Right cardiac atrium (tissue), 5 donors: ENCODE measurements at regions of chr12 and their contacts with region 1.

Region 1: GRCh38 chr12:642633-643474 is 20.4 kb downstream of the NINJ2 start:
- DNase-seq: peak; percentile 83 to 92 (median 91)
- ATAC-seq: peak; percentile 62 to 74
- H3K4me3 ChIP-seq: peak overlapping the region; percentile 57
- H3K27ac ChIP-seq: peak overlapping the region; percentile 90
- H3K4me1 ChIP-seq: peaks cover 16% of the 10 kb centered on the region
- H3K27me3 ChIP-seq: no peaks in the 10 kb centered on the region

Region 2: DNA sequence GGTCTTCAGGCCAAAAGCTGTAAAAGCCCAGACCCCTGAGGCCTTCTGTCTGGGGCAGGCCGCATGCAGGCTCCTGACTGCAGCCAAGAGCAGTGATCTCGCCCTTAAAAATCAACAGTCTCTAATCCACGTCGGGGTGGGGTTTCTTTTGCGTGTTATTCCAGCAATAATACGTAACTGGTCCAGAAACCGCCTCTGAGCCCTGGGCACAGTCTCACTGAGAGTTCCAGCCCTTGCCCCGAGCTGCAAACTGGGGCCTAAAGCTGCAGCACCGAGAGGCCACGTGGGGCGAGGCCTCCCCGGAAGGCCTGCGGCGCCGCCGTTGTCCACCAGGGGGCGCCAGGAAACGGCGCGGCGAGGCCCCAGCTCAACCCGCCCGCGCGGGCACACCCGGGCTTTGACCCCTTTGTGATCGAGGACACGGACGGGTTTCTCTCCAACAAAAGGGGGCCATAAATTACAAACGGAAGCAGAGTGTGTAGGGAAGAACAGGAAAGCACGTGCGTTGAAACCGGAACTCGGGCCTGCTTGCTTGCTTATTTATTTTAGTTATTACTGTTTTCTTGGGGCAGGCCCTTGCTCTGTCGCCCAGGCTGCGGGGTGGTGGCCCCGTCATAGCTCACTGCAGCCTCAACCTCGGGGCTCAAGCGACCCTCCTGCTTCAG is 66.8 kb before region 1 on chr12:
- intact Hi-C with region 1: loop called in 1 of 4 experiments (anchors 10 kb)
- DNase-seq: peak; percentile 88 to 95 (median 95)
- ATAC-seq: peak; percentile 74 to 82
- H3K4me3 ChIP-seq: no peak overlapping the region
- H3K27ac ChIP-seq: peak overlapping the region; percentile 75
- H3K4me1 ChIP-seq: peaks cover 12% of the 10 kb centered on the region
- H3K27me3 ChIP-seq: no peaks in the 10 kb centered on the region

Region 3: DNA sequence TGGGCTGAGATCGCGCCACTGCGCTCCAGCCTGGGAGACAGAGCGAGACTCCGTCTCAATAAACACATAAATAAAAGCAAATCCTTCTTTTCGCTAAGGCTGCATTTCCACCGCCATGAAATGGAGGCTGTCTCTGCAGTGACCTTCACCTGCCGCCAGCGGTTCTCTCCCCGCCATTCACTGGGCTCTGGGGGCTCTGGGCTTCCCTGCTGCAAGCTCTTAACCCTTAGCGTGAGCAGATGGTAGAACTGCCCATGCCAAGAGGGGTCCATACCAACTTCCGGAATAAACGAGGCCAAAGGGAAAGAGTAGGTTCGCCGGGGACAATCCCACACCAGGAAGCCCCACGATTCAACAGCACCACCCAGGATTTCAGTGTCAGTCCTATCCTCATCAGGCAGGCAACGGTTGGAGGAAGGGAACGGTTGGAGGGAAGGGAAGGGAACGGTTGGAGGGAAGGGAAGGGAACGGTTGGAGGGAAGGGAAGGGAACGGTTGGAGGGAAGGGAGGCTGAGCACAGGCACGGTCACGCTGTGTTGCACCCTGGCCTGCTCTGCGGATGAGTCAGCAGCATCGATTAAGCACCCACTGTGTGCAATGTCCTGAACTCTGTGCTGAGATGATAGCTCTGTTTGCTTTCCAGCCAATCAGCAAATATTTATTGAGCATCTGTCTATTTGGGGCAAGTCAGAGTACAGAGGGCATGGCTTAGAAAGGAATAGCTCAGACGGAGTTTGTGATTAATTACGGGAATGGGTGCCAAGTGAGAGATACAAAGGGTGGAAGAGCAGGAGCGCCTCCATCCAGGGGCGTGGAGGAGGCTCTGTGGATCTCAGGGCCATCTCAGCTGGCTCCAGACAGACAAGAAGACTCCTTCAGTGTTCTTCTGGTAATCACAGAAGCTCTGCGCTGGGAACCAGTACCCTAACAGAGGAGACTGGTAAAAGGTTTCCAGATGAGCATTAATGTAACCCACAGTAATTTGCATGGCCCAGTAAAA is 57.5 kb before region 1 on chr12:
- intact Hi-C with region 1: loop called in 1 of 4 experiments (anchors 5 kb)
- DNase-seq: no peak
- ATAC-seq: no peak
- H3K4me3 ChIP-seq: no peak overlapping the region
- H3K27ac ChIP-seq: no peak overlapping the region
- H3K4me1 ChIP-seq: no peaks in the 10 kb centered on the region
- H3K27me3 ChIP-seq: no peaks in the 10 kb centered on the region

Region 4: GRCh38 chr12:607526-608001 is 35.3 kb before region 1 on chr12:
- intact Hi-C with region 1: loop called in 1 of 4 experiments (anchors 5 kb)
- DNase-seq: peak; percentile 81 to 89 (median 86)
- ATAC-seq: peak; percentile 74 to 78
- H3K4me3 ChIP-seq: no peak overlapping the region
- H3K27ac ChIP-seq: peak overlapping the region; percentile 74
- H3K4me1 ChIP-seq: peaks cover 16% of the 10 kb centered on the region
- H3K27me3 ChIP-seq: no peaks in the 10 kb centered on the region

Region 5: GRCh38 chr12:810671-811415 is 168.0 kb after region 1 on chr12:
- intact Hi-C with region 1: loop called in 1 of 4 experiments (anchors 10 kb)
- DNase-seq: no peak
- ATAC-seq: peak in 1 of 2 donors; percentile 33
- H3K4me3 ChIP-seq: no peak overlapping the region
- H3K27ac ChIP-seq: no peak overlapping the region
- H3K4me1 ChIP-seq: peaks cover 3% of the 10 kb centered on the region
- H3K27me3 ChIP-seq: no peaks in the 10 kb centered on the region